ENCODE measurements at regions of chr4 and their contacts with region 1.

Region 1: DNA sequence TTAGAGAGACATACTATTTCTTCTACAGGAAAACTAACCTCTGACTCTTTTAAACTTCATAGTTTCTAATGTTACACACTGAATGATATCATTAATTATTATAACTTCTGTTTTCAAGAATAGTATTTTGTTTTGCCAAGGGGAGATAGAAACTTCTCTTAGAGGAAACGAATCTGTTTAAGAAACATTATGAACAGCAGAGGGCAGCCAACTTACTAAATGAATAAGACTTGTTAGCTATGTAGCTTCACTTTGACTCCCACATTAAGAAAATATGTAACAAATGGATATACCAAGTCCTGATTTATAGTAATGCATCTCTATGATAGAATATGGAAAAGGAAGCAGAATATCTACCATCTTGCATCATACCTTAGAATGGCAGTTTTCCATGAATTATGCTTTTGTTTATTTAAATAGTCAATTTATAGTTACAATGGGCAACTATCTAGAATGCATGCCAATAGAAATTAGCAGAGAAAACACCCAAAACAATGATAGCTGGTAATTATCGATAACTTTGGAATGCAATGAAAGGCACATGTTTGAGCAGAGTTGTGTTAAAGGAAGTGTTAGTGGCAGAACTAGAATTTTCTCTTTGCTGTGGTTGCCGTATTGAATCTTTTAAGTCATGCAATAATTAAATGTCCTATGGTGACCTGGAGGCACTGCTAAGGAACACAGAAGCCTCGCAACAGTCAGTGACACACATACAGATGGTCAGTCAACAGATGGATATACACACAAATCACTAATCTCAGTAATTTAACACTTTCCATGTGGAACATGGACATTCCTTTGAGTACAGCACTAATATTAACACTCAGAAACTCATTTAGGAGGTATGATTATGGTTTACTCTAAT is 105.7 kb upstream of the PDLIM3 start:
- DNase-seq: no peak
- ATAC-seq: no peak
- H3K4me3 ChIP-seq: no peak overlapping the region
- H3K27ac ChIP-seq: no peak overlapping the region
- H3K4me1 ChIP-seq: no peaks in the 10 kb centered on the region
- H3K27me3 ChIP-seq: no peaks in the 10 kb centered on the region
- CTCF ChIP-seq: peak; percentile 47

Region 2: DNA sequence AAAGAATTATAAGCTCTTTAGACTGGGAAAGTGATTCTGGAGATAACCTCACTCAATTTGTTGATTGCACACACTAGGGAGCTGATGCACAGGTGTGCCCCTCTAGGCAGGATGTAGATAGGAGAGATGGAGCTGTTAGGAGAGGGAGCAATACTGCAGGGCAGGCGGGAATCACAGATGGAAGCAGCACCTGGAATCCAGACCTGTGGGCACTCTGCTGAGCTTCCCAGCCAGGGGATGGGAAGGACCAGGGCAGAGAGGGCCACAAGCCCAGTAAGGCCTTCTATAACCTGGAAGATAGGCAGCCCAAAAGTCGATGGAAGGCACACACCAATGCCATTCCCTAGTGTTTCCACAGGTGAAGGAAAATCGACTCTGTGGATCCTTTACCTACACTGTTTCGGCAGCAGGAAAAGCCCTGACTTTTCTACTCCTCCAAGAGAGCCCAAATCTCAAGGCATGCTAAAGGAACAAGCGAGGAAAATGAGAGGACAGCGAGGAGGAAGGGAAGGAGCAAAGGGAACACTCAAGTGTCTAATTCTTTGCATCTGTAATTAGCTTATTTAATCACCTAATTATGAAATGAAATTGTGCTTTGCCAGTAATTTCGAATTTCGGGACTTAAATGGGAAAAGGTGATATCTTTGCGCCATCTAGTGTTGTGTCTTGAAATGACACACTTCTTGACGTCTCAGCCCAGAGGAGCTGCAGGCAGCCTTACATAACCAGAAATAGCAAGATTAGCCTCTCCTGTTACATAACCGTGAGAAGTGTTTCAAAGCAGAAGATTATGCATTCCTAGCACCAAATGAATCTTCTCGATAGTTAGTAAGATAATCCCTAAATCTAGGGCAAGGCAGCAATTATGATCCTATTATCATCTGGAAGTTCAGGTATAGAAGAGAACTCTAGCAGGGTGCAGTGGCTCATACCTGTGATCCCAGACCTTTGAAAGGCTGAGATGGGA is 396.9 kb after region 1 on chr4:
- intact Hi-C with region 1: loop called (anchors 10 kb)
- DNase-seq: no peak
- ATAC-seq: peak; percentile 88 to 92
- H3K4me3 ChIP-seq: no peak overlapping the region
- H3K27ac ChIP-seq: no peak overlapping the region
- H3K4me1 ChIP-seq: peaks cover 12% of the 10 kb centered on the region
- H3K27me3 ChIP-seq: no peaks in the 10 kb centered on the region
- CTCF ChIP-seq: peak; percentile 83

Measured in lower lobe of right lung (tissue), 2 donors.